Activated CD4-positive, alpha-beta memory T cell treated with anti-CD3 and anti-CD28 coated beads for 36 hours (primary cell): ENCODE measurements at regions of chr1 and their contacts with region 1.

Region 1: GRCh38 chr1:26787706-26788514 is at the start of gene PIGV:
- DNase-seq: peak; percentile 90
- H3K4me3 Mint-ChIP-seq: peak within 1 kb of the TSS; percentile 90
- H3K27ac Mint-ChIP-seq: peak within 1 kb of the TSS; percentile 99
- H3K4me1 Mint-ChIP-seq: peaks cover 77% of the 10 kb centered on the region
- H3K27me3 Mint-ChIP-seq: no peaks in the 10 kb centered on the region
- total RNA-seq, gene PIGV: 15.1 to 15.3 TPM

Region 2: GRCh38 chr1:26516987-26517765 is 270.7 kb before region 1 on chr1:
- CTCF ChIA-PET with region 1: no interaction called
- POLR2A ChIA-PET with region 1: no interaction called
- intact Hi-C with region 1: no loop called
- DNase-seq: no peak
- H3K4me3 Mint-ChIP-seq: no peak overlapping the region
- H3K27ac Mint-ChIP-seq: no peak overlapping the region
- H3K4me1 Mint-ChIP-seq: no peaks in the 10 kb centered on the region
- H3K27me3 Mint-ChIP-seq: no peaks in the 10 kb centered on the region

Region 3: DNA sequence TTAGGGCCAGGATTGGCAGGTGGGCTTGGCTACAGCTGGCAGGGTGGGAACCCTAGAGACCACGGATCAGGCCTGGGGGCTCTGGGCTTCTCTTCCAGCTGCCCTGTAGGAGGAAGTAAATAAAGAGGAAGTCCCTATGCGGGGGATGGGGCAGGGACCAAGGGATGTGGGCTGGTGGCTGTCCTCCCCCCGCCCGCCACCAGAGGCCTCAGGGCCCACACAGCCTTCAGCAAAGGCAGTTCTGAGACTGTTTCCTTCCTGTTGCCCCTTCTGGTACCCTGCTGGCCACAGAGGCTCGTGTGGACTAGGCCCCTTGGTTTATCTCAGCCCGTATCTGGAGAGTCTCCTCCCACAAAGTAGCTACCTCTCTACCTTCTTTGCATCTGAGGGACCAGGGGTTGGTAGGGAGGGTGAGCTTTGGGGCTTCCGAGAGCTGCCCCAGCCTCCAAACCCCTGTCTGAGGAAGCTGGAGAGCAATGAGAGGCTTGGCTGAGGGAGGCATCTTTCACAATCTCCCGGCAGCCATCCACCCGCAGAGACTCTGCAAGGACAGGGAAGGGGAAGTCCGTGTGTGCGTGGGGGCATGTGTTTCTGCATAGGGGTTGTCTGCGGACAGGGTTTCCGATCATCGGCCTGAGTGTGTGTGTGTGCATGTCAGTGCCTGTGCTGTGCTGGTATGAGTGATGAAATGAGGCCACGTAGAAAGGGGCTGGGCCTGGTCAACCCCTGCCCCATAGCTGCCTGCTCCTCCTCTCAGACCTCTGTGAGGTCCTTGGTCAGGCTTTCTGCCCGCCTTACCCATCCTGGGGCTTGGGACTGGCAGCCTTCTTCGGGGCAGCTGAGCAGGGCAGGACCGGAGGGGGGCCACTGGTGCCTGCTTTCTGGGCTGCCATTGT is 245.8 kb before region 1 on chr1:
- CTCF ChIA-PET with region 1: interaction called, 15 read pairs
- POLR2A ChIA-PET with region 1: interaction called, 7 read pairs
- intact Hi-C with region 1: loop called (anchors 2 kb)
- DNase-seq: peak; percentile 94
- H3K4me3 Mint-ChIP-seq: peak overlapping the region; percentile 69
- H3K27ac Mint-ChIP-seq: peak overlapping the region; percentile 98
- H3K4me1 Mint-ChIP-seq: peaks cover 88% of the 10 kb centered on the region
- H3K27me3 Mint-ChIP-seq: no peaks in the 10 kb centered on the region

Region 4: DNA sequence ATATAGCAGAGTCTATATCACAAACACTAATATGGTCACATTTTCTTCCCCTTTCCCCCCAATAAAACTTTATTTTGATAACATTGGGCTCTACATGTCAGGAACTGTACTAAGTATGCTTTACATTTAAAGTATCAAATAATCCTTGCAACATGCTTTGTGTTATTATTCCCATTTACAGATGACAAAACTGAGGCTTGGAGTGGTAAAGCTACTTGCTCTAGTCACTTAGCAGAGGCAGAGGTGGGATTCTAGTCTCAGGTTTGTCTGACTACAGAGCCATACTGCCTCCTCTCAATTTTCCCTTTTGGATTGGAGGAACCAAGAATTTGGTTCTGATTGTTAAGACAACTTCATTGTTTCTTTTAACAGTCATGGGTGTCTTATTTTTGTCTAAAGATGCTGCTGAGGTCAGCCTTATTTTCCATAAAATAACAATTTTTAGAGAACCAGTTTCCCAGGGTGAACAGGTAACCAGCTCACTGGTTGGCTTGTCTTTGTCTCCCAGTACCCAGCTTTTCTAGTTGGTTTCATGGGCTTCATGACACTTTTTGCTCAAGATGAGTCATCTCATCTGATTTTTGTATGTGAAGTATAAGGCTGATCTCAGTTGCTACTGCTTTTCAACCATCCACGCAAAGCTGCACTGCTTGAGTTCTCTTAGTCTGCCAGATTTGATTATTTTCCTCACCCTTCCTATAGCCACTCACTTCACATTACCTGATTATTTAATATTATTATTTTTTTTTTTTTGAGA is 173.1 kb before region 1 on chr1:
- CTCF ChIA-PET with region 1: interaction called, 12 read pairs
- POLR2A ChIA-PET with region 1: interaction called, 3 read pairs
- intact Hi-C with region 1: no loop called
- DNase-seq: no peak
- H3K4me3 Mint-ChIP-seq: no peak overlapping the region
- H3K27ac Mint-ChIP-seq: no peak overlapping the region
- H3K4me1 Mint-ChIP-seq: peaks cover 9% of the 10 kb centered on the region
- H3K27me3 Mint-ChIP-seq: no peaks in the 10 kb centered on the region

Region 5: DNA sequence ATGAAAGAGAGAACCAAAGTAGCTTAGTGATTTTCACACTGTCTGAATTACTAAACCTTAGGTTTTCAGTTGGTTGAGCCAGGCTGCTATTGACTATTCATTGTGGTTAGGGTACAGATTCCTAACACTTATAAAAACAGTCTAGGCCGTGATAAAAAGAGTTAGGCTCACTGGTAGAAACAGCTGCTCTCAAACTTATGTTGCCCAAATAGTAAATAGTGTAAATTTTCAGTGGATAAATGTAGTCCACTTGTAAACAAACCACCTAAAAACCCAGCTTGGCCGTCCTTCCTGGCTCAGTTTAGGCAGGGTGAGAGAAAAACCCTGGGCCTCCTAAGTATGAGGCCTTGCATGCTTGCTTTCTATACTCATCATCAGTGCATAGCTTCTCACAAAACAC is 57.2 kb before region 1 on chr1:
- CTCF ChIA-PET with region 1: interaction called, 28 read pairs
- POLR2A ChIA-PET with region 1: interaction called, 5 read pairs
- intact Hi-C with region 1: no loop called
- DNase-seq: no peak
- H3K4me3 Mint-ChIP-seq: no peak overlapping the region
- H3K27ac Mint-ChIP-seq: peak overlapping the region; percentile 69
- H3K4me1 Mint-ChIP-seq: peaks cover 91% of the 10 kb centered on the region
- H3K27me3 Mint-ChIP-seq: no peaks in the 10 kb centered on the region

Region 6: DNA sequence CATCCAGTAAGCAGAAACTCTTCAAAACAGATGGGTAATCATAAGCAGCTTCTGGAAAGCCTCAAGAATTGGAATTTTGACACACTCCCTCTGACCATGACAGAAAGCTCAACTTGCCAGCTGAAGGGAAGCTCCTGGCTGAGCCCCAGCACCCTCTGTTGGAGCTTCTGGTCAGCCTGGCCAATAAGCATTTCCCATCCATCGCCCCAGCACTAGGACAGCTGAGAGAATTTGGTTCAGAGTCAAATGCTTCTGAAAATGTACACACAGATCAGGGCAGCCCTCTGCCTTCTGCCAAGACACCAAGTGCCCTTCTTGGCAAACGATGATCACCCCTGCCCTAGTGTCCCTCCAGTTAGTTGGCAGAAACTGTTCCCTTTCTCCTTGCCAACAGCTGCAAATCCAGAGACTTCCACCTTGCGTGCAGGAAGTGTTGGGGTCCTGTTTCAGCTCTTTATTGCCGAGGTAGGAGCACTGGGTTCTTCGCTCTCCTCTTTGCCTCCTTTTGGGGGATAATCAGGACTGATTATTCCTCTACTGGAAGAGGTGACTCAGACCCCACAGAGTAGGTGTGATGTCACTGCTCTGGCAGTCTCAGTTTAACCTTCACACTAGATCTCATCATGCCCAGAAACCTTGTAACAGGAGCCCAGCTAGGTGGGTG is 11.7 kb after region 1 on chr1:
- CTCF ChIA-PET with region 1: interaction called, 42 read pairs
- POLR2A ChIA-PET with region 1: interaction called, 7 read pairs
- intact Hi-C with region 1: loop called (anchors 1 kb)
- DNase-seq: peak; percentile 33
- H3K4me3 Mint-ChIP-seq: no peak overlapping the region
- H3K27ac Mint-ChIP-seq: peak overlapping the region; percentile 89
- H3K4me1 Mint-ChIP-seq: peaks cover 35% of the 10 kb centered on the region
- H3K27me3 Mint-ChIP-seq: no peaks in the 10 kb centered on the region

Region 7: DNA sequence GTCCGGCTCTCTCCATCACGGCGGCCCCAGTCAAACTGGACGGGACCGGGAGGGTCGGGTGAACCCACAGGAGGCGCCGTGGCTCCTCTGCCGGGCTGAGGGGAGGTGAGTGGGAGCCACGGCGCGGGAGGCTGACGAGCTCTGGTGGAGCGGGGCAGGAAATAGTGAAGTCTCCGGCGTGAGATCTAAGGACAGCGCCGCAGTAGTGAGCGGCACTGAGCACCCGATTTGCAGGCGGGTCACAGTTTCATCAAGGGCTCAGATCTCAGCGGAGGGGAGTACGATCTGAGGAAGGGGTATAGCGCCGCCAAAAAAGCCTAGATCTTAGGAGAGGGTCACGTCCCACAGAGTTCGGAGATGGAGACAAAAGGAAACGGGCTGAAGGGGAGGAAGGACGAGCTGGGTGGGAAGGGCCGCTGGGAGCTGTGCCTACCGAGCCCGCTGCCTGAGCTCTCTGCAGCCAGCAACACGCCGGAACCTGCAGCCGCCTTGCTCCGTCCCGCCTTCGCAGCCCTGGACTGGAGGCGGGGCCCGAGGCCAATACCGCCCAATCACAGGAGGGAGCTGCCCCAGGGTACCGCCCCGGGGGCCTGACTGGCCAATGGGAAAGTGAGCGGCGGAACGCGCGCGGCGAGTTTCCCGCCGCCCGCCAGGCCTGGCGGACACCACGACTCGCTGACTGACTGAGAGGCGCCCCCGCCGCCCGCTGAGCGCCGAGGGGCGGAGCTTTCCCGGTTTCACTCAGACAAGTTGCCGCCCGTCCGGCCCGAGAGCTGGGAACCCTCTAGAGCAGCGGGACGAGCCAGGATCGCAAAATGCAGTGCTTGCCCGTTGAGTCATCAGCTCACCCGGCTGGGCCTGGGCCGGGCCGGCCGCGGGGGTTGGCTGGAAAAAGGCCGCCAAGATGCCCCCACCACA is 77.0 kb after region 1 on chr1:
- CTCF ChIA-PET with region 1: interaction called, 4 read pairs
- POLR2A ChIA-PET with region 1: interaction called, 12 read pairs
- intact Hi-C with region 1: loop called (anchors 2 kb)
- DNase-seq: peak; percentile 97
- H3K4me3 Mint-ChIP-seq: peak overlapping the region; percentile 98
- H3K27ac Mint-ChIP-seq: peak overlapping the region; percentile 94
- H3K4me1 Mint-ChIP-seq: peaks cover 29% of the 10 kb centered on the region
- H3K27me3 Mint-ChIP-seq: no peaks in the 10 kb centered on the region